IMR-90 (cell line): ENCODE measurements at regions of chr7 and their contacts with region 1.

Region 1: GRCh38 chr7:116736927-116737715 is 65.1 kb downstream of the MET start:
- DNase-seq: peak; percentile 48
- ATAC-seq: no peak
- H3K4me3 ChIP-seq: no peak overlapping the region
- H3K27ac ChIP-seq: no peak overlapping the region
- H3K4me1 ChIP-seq: peaks cover 19% of the 10 kb centered on the region
- H3K27me3 ChIP-seq: no peaks in the 10 kb centered on the region
- CTCF ChIP-seq: no peak
- POLR2A ChIP-seq: no peak
- RAD21 ChIP-seq: no peak

Region 2: DNA sequence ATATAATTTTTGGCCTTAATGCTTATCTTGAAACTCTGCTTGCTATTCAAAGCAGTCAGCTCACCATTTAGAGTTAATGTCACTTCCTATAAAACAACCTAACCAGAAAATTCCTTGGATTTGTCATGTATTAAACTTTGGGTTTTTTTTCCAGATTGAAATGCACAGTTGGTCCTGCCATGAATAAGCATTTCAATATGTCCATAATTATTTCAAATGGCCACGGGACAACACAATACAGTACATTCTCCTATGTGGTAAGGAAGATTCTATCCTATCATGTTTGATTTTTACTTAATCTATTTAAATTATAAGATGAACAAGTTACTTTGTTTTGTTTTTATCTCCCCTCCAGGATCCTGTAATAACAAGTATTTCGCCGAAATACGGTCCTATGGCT is 20.2 kb after region 1 on chr7:
- CTCF ChIA-PET with region 1: no interaction called
- POLR2A ChIA-PET with region 1: interaction called, 4 read pairs
- dilution Hi-C with region 1: no loop called
- in situ Hi-C with region 1: no loop called
- intact Hi-C with region 1: loop called (anchors 2 kb)
- DNase-seq: no peak
- ATAC-seq: no peak
- H3K4me3 ChIP-seq: no peak overlapping the region
- H3K27ac ChIP-seq: no peak overlapping the region
- H3K4me1 ChIP-seq: no peaks in the 10 kb centered on the region
- H3K27me3 ChIP-seq: no peaks in the 10 kb centered on the region
- CTCF ChIP-seq: no peak
- POLR2A ChIP-seq: no peak
- RAD21 ChIP-seq: no peak

Region 3: GRCh38 chr7:116776610-116777289 is 39.6 kb after region 1 on chr7:
- CTCF ChIA-PET with region 1: interaction called, 3 read pairs
- POLR2A ChIA-PET with region 1: no interaction called
- dilution Hi-C with region 1: no loop called
- in situ Hi-C with region 1: no loop called
- intact Hi-C with region 1: loop called (anchors 5 kb)
- DNase-seq: peak; percentile 85
- ATAC-seq: no peak; the same call in 1 of the 2 replicates
- H3K4me3 ChIP-seq: no peak overlapping the region
- H3K27ac ChIP-seq: no peak overlapping the region
- H3K4me1 ChIP-seq: peaks cover 29% of the 10 kb centered on the region
- H3K27me3 ChIP-seq: no peaks in the 10 kb centered on the region
- CTCF ChIP-seq: no peak
- POLR2A ChIP-seq: no peak
- RAD21 ChIP-seq: no peak